CD8-positive, alpha-beta T cell (primary cell): ENCODE measurements at regions of chr12 and their contacts with region 1.

Region 1: DNA sequence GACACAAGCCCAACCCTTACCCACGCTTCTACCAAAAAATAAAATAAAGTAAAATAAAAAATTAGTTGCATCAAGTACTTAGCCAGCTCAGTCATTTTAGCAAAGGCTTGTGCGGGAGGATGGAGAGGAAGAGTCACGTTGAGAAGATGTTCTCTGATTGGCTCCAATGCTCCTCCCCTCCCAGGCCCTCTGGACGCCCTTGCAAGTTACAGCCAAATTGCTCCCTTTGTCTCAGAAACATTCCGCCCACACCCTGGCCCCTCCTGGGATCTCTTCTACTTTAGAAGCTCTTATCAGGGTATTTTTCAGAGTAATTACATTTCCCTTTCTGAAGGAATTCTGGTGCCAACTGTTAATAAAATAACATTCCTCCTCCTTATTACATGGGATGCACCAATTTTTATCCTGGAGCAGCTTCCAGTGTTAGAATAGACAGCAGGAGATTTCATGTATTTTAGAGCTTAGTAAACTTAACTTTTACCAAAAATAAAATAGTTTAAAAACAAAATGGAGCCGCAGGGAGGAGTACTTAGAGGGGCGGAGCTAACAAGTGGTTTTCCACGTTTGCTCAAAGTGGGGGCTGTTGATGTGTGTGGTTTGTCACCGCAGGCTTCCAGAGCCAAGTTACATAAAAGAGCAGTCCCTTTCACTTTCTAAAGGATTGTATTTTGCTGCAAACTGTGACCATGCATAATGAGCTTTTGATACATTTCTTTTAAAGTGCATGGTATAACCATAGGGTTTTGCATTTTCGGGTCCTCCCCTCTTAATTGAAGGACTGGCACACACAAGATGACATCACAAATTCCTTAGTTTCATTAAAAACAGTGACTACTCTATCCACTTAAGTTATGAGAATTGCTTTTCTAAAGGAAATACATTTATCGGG is 71.7 kb upstream of the RAP1B start:
- DNase-seq: peak; percentile 34 to 93 (median 66)
- ATAC-seq: peak; percentile 93
- H3K4me3 ChIP-seq: peak overlapping the region in 1 of 2 experiments; percentile 1
- H3K4me3 Mint-ChIP-seq: peak overlapping the region; percentile 67
- H3K27ac ChIP-seq: peak overlapping the region; percentile 9 to 37
- H3K27ac Mint-ChIP-seq: peak overlapping the region; percentile 91
- H3K4me1 ChIP-seq: peaks cover 39% of the 10 kb centered on the region
- H3K4me1 Mint-ChIP-seq: peaks cover 57% of the 10 kb centered on the region
- H3K27me3 ChIP-seq: no peaks in the 10 kb centered on the region
- H3K27me3 Mint-ChIP-seq: no peaks in the 10 kb centered on the region
- CTCF ChIP-seq: no peak

Region 2: GRCh38 chr12:68587448-68587873 is 48.5 kb after region 1 on chr12:
- CTCF ChIA-PET with region 1: no interaction called
- POLR2A ChIA-PET with region 1: interaction called, 10 read pairs
- intact Hi-C with region 1: loop called (anchors 5 kb)
- DNase-seq: peak in 7 of 9 experiments; percentile 11 to 75 (median 56)
- ATAC-seq: peak; percentile 71
- H3K4me3 ChIP-seq: no peak overlapping the region
- H3K4me3 Mint-ChIP-seq: peak overlapping the region; percentile 56
- H3K27ac ChIP-seq: peak overlapping the region in 1 of 2 experiments; percentile 44
- H3K27ac Mint-ChIP-seq: peak overlapping the region; percentile 87
- H3K4me1 ChIP-seq: peaks cover 66% of the 10 kb centered on the region
- H3K4me1 Mint-ChIP-seq: peaks cover 62% of the 10 kb centered on the region
- H3K27me3 ChIP-seq: no peaks in the 10 kb centered on the region
- H3K27me3 Mint-ChIP-seq: no peaks in the 10 kb centered on the region
- CTCF ChIP-seq: no peak